ENCODE measurements at regions of chr5 and their contacts with region 1.

Region 1: DNA sequence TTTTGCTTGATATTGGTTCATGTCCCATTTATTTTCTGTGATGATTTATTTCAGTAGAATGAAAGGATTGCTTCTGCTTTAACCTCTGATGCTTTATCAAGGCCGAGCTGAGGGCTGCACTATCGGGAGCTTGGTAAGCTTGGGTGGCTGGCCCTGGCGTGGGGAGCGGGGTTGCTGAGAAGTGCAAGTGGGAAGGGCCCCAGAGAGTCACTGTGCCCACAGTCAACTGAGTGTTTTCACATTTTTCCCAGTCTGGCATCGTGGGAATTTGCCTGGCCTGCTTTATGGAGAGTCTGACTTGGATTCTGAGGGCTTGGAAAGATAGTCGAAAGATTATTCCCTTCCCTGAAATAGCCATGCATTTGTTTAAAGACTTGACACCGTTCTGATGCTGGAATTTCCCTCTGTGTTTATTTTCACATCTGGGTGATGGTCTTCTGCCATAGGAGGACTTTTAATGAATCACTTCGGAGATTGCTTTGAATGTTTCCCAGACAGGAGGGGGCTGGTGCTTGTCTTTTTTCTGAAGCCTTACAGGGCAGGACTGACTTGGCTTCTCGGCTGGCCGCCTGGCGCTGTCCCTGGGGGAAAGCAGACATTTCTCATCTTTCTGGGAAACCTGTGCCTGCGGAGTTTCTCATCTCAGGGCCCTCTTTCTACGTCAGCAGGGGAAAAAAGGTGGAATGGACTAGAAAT is 139.0 kb downstream of the BOD1 start:
- DNase-seq: no peak
- H3K4me3 ChIP-seq: no peak overlapping the region
- H3K27ac ChIP-seq: peak overlapping the region; percentile 64 to 92 (median 87)
- H3K4me1 ChIP-seq: peaks cover 0 to 70% (median 58%) of the 10 kb centered on the region in 4 donors
- H3K27me3 ChIP-seq: no peaks in the 10 kb centered on the region
- CTCF ChIP-seq: no peak
- EP300 ChIP-seq: peak in 3 of 4 donors; percentile 38 to 79 (median 66)
- POLR2A ChIP-seq: no peak

Region 2: GRCh38 chr5:173417520-173417919 is 60.0 kb before region 1 on chr5:
- intact Hi-C with region 1: loop called (anchors 5 kb)
- DNase-seq: no peak
- H3K4me3 ChIP-seq: no peak overlapping the region
- H3K27ac ChIP-seq: no peak overlapping the region
- H3K4me1 ChIP-seq: peaks cover 0 to 18% (median 12%) of the 10 kb centered on the region in 4 donors
- H3K27me3 ChIP-seq: no peaks in the 10 kb centered on the region
- CTCF ChIP-seq: no peak
- EP300 ChIP-seq: no peak
- POLR2A ChIP-seq: no peak

Measured in sigmoid colon (tissue), 7 donors.